Activated CD8-positive, alpha-beta memory T cell treated with anti-CD3 and anti-CD28 coated beads, Interleukin-2, amount 10 ng/mL, durations not matched to agents 7 days and 5 days (primary cell): ENCODE measurements at regions of chr17 and their contacts with region 1.

Region 1: DNA sequence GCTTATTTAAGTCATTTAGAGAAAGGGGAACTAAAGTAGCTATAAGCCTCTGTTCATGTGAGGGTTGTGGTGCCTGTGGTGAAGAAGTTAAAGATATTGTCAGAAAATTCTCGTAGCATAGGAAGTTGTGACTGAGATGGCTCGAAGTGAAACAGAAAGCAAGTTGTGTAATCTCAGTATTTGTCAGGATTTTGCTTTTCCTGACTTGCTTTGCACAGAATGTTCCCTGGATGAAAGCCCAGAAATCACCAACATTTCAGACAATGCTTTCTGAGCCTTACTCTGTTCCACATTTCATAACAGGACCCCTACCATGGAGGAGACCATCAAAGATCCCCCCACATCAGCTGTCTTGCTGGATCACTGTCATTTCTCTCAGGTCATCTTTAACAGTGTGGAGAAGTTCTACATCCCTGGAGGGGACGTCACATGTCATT is 10.6 kb downstream of the CALCOCO2 start:
- DNase-seq: peak; percentile 84
- ATAC-seq: peak; percentile 92
- H3K4me3 Mint-ChIP-seq: peak overlapping the region; percentile 63
- H3K27ac Mint-ChIP-seq: peak overlapping the region; percentile 89
- H3K4me1 Mint-ChIP-seq: peaks cover 63% of the 10 kb centered on the region
- H3K27me3 Mint-ChIP-seq: no peaks in the 10 kb centered on the region

Region 2: DNA sequence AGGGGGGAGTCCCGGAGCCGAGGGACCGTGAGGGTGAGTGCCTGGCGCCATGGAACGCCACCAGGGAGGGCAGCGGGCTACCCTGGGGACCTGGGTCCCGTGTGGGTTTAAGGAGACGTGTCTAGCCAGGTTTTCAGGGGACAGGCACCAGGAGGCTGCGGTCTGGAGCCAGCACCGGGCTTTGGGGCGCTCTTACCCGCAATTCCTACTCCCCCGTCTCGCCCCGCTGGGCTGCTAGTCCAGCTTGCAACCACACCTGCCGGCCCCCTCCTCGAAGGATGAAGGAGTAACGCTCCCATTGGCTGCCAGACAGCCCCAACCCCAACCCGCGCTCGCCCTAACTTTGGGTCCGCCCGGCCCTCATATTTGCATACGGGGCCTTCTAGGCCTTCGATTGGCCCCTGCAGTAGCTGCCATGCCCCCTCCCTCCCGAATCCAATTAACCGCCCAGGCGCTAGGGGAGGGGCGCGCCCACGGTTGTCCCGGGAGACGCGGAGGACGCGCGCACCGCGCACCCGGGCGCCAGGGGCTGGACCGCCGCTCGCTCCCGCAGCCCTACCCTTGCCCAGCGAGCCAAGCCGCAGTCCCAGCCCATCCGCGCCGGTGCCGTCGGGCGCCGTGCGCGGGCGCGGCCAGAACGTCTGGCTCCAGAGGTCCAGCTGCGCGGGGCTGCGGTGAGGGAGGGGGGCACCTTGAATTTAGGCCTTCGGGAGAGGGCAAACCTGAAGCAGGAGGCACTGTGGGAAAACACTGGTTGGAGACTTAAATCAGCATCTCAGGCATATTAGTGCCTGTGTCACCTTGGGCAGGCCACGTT is 24.4 kb before region 1 on chr17 and contains the start of gene TTLL6:
- CTCF ChIA-PET with region 1: interaction called, 13 read pairs
- DNase-seq: peak; percentile 84
- ATAC-seq: peak; percentile 98
- H3K4me3 Mint-ChIP-seq: peak within 1 kb of the TSS; percentile 61
- H3K27ac Mint-ChIP-seq: no peak within 1 kb of the TSS
- H3K4me1 Mint-ChIP-seq: peaks cover 24% of the 10 kb centered on the region
- H3K27me3 Mint-ChIP-seq: peaks cover 62% of the 10 kb centered on the region
- total RNA-seq, gene TTLL6: not detected

Region 3: DNA sequence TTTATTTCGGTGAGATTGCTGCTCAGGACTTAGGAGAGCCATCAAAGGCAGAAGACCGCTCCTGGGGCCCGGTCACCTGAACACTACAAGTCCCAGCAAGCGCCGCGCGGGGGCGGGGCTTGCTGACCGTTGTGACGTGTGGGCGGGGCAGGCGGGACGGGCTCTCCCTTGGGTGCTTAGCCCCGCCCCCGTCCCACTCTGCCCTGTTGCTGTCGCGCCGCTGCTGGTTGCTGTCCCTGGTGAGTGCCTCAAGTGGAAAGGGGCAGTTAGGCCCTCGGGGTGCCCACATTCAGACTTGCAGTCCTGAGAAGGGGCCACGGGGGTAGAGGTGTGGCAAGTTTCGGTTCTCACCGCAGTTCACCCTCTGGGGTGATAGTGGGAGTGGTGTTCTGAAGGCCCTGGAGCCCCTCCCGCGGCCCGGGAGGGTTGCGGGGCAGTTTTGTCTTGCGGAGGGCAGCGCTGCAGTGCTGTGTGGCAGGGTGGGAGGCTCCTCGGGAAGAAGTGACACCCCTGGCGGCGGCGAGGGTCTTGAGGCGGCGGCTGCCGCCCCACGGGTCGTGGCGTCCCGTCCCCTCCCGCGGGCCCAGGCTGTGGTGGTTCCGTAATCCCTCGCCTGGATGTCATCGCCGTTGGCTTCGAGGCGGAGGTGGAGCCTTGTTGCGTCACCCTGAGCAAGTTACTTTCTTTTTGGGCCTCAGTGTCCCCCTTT is 10.4 kb before region 1 on chr17 and contains the start of gene CALCOCO2:
- CTCF ChIA-PET with region 1: interaction called, 31 read pairs
- DNase-seq: peak; percentile 95
- ATAC-seq: peak; percentile 90
- H3K4me3 Mint-ChIP-seq: peak within 1 kb of the TSS; percentile 97
- H3K27ac Mint-ChIP-seq: peak within 1 kb of the TSS; percentile 100
- H3K4me1 Mint-ChIP-seq: peaks cover 57% of the 10 kb centered on the region
- H3K27me3 Mint-ChIP-seq: peaks cover 8% of the 10 kb centered on the region
- total RNA-seq, gene CALCOCO2: 165 to 170 TPM

Region 4: DNA sequence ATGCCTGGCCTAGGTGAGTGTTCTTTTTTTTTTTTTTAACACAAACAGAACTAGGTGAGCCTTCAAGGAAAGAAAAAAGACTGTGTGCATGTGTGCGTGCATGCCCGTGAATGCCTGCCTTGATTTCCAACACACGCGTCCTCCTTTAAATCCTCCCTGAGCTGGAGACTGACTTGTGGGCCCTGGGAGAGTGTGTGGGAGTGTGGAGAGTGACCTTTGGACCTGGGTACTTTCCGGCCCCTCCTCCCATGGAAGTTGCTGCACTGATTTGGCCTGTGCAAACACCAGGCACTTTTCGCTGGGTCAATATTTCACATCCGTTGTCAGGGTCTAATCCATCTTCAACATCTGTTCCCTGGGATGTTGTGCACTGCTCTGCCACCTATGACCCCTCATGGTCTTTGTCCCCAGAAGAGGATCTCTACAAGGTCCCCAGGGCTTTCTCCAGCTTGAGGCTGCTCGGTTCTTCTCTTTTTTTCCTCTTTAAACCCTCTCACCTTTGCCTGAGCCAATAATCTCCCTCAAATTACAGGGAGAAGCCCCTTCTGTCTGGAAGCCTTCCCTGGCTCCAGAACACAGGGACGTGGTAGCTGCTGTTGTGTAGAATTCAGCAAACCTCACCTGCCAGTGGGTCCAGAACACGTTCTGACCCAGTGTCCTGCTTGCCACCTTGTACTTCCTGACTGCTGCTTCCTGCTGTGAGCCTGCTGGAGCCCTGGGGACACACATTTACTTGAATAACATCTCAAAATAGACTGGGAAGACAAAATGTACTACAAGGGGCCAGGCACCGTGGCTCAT is 30.3 kb after region 1 on chr17:
- CTCF ChIA-PET with region 1: no interaction called
- DNase-seq: no peak
- ATAC-seq: no peak
- H3K4me3 Mint-ChIP-seq: no peak overlapping the region
- H3K27ac Mint-ChIP-seq: no peak overlapping the region
- H3K4me1 Mint-ChIP-seq: peaks cover 10% of the 10 kb centered on the region
- H3K27me3 Mint-ChIP-seq: no peaks in the 10 kb centered on the region

Region 5: DNA sequence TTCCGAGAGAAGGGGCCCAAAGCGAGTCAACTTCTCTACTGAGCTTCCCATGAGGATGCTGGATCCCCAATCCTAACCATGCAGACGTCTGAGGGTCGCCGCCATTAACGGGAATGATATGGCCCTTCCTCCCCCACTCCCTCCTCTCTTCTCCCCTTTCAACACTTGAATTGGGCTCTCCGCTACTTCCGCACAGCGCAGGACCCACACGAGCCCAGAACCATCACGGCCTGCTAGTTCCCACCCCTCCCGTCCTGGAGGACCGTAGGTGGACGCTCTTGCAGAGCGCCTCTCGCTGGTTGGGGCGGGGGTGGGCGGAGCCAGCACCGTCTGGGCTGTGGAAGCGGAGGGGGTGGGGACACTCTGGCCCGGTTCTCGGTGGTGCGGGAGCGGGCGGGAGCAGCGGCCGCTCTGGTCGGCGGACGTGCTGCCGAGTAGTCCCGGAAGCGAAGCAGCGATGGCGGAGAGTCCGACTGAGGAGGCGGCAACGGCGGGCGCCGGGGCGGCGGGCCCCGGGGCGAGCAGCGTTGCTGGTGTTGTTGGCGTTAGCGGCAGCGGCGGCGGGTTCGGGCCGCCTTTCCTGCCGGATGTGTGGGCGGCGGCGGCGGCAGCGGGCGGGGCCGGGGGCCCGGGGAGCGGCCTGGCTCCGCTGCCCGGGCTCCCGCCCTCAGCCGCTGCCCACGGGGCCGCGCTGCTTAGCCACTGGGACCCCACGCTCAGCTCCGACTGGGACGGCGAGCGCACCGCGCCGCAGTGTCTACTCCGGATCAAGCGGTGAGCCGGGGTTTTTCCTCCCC is 66.8 kb after region 1 on chr17 and contains the start of gene UBE2Z:
- CTCF ChIA-PET with region 1: no interaction called
- DNase-seq: peak; percentile 93
- ATAC-seq: peak; percentile 84
- H3K4me3 Mint-ChIP-seq: peak within 1 kb of the TSS; percentile 95
- H3K27ac Mint-ChIP-seq: peak within 1 kb of the TSS; percentile 95
- H3K4me1 Mint-ChIP-seq: peaks cover 47% of the 10 kb centered on the region
- H3K27me3 Mint-ChIP-seq: no peaks in the 10 kb centered on the region
- total RNA-seq, gene UBE2Z: 73.7 to 90.6 TPM